GM10248 (cell line): ENCODE measurements at regions of chr7 and their contacts with region 1.

Region 1: GRCh38 chr7:106176414-106177299 is 64.5 kb upstream of the SYPL1 start:
- DNase-seq: peak; percentile 77
- CTCF ChIP-seq: peak; percentile 98

Region 2: GRCh38 chr7:106199813-106200364 is 23.2 kb after region 1 on chr7:
- CTCF ChIA-PET with region 1: interaction called, 10 read pairs
- POLR2A ChIA-PET with region 1: interaction called, 3 read pairs
- DNase-seq: no peak
- CTCF ChIP-seq: no peak

Region 3: GRCh38 chr7:106225856-106226255 is 49.2 kb after region 1 on chr7:
- CTCF ChIA-PET with region 1: interaction called, 10 read pairs
- POLR2A ChIA-PET with region 1: no interaction called
- DNase-seq: no peak
- CTCF ChIP-seq: no peak

Region 4: DNA sequence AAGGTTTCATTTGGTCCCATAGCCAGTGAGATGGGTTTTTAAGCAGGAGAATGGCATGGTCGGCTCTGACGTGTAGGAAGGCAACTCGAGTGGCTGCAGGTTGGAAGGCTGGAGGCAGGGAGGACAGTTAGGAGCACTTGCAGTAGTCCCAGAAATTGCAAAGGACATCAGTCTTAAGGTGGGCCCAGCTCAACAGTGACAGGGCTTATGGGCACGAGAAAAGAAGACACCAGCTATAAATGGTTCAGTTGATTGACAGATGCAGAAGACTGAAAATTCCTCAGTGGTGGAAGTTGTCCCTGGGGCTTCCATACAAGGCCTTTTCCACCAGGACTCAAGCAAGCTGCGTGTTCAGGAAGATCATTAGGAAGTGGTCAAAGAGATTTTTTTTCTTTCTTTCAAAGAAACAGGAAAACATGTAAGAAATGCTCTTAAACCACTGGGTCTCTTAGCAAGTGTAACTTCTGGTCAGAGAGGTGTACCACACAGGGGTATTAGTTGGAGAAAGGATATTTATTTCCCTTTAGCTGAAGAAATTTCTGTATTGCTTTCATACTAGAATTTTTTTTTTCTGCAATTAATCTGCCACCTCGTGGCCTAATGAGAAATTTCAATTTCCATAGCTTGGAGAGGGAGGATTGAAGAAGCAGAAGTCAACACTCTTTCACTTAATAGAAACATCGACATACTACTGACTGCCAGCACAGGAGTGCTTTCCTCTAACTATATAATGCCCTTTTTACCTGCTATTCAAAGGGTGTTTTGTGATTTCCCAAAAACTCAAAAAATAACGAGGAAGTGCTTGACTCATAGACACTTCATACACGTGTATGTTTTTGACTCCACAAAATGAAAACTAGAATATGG is 285.6 kb after region 1 on chr7:
- CTCF ChIA-PET with region 1: interaction called, 173 read pairs
- POLR2A ChIA-PET with region 1: no interaction called
- DNase-seq: peak; percentile 27
- CTCF ChIP-seq: peak; percentile 52

Region 5: GRCh38 chr7:106659963-106660861 is 483.6 kb after region 1 on chr7:
- CTCF ChIA-PET with region 1: interaction called, 29 read pairs
- POLR2A ChIA-PET with region 1: no interaction called
- DNase-seq: peak; percentile 88
- CTCF ChIP-seq: peak; percentile 86

Region 6: DNA sequence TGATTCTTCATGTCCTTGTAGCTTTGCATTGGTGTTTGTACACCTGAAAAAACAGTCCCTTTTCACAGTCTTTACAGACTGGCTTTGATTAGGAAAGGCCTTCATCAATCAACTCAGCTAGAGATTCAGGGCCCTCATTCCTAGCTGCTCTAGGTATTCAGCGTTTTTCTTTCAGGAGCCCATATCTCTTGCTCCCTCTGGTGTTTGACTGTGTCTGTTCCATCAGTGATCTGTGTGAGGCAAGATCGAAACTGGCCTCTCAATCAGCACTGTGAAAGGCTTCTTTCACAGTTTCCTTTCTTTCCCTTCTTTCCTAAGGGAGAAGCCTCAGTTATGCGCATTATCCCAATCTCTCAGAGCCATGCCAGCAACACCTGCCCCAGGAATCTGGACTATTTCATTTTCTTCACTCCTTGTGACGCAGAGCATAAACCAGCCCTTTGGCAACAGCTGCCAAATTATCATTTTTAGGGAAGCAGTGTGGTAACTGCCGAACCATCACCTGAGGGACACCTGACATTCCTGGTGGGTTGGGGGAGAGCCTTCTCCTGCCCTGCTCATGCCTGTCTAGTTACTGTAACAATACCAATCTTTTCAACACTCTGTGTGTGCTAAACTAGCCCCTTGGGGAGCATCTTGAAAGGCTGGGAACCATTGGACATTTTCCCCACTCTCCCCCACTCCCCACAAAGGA is 560.0 kb after region 1 on chr7:
- CTCF ChIA-PET with region 1: interaction called, 36 read pairs
- POLR2A ChIA-PET with region 1: no interaction called
- DNase-seq: peak; percentile 53
- CTCF ChIP-seq: peak; percentile 59